ENCODE measurements at regions of chr11 and their contacts with region 1.

Region 1: GRCh38 chr11:124753205-124753604 is 1.1 kb upstream of the VSIG2 start:
- DNase-seq: no peak
- H3K4me3 ChIP-seq: no peak overlapping the region
- CTCF ChIP-seq: no peak

Region 2: DNA sequence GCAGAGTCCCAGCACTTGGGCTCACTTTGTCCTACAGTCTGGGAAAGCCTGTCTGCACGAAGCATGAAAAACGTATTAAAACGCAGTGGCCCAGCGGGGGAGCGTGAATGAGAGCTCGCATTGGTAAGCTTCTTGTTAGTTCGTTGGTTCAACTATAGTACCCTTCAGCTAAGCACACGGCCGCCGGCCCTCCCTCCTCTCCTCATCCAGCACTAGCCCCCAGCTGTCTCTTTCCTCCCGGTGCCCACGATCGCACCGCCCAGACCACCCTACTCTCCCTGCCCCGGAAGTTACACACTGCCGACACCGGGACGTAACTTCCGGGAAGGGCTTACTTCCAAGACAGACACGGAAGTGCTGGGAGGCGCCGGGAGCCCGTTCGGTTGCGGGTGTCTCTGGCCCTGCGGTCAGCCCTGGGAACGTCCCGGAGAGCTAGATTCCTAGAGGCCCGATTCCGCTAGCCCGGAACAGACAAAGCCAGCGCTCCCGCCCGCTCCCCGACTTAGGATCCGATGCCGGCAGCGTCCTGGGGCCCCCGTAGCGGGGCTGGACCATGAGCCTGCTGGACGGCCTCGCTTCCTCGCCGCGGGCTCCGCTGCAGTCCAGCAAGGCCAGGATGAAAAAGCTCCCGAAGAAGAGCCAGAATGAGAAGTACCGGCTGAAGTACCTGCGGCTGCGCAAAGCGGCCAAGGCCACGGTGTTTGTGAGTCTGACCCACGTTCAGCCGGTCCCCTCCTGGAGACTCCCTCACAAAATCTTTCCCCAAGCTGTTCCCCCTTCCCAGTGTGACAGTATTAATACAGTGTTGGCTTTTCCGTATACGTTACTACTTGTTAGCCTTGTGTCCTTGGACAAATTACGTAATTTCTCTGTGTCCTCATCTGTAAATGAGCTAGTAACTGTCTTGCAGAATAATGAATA is 130.4 kb before region 1 on chr11 and contains the start of gene TBRG1:
- CTCF ChIA-PET with region 1: no interaction called
- POLR2A ChIA-PET with region 1: no interaction called
- DNase-seq: peak; percentile 42
- H3K4me3 ChIP-seq: peak within 1 kb of the TSS; percentile 87
- CTCF ChIP-seq: no peak

Region 3: GRCh38 chr11:124739479-124740276 is 13.5 kb before region 1 on chr11 and contains the start of gene NRGN:
- CTCF ChIA-PET with region 1: interaction called, 50 read pairs
- POLR2A ChIA-PET with region 1: no interaction called
- DNase-seq: no peak
- H3K4me3 ChIP-seq: peak within 1 kb of the TSS; percentile 60
- CTCF ChIP-seq: no peak